ENCODE measurements at regions of chr5 and their contacts with region 1.

Region 1: GRCh38 chr5:43040287-43041098 is at the start of gene ANXA2R:
- DNase-seq: peak; percentile 87 to 98 (median 95)
- H3K4me3 ChIP-seq: peak within 1 kb of the TSS; percentile 98
- H3K4me3 Mint-ChIP-seq: peak within 1 kb of the TSS; percentile 91 to 100 (median 99)
- H3K27ac ChIP-seq: peak within 1 kb of the TSS; percentile 88
- H3K27ac Mint-ChIP-seq: peak within 1 kb of the TSS; percentile 97 to 100 (median 99)
- H3K4me1 ChIP-seq: peaks cover 36% of the 10 kb centered on the region
- H3K4me1 Mint-ChIP-seq: peaks cover 45 to 62% (median 51%) of the 10 kb centered on the region in 3 donors
- H3K27me3 ChIP-seq: no peaks in the 10 kb centered on the region
- H3K27me3 Mint-ChIP-seq: peaks cover 0 to 13% of the 10 kb centered on the region in 2 donors
- total RNA-seq, gene ANXA2R: 6.0 to 6.8 TPM

Region 2: GRCh38 chr5:42908509-42909488 is 131.7 kb before region 1 on chr5:
- CTCF ChIA-PET with region 1: interaction called, 86 read pairs
- POLR2A ChIA-PET with region 1: interaction called, 18 read pairs
- DNase-seq: peak; percentile 82 to 95 (median 88)
- H3K4me3 ChIP-seq: peak overlapping the region; percentile 78
- H3K4me3 Mint-ChIP-seq: peak overlapping the region; percentile 78 to 98 (median 94)
- H3K27ac ChIP-seq: no peak overlapping the region
- H3K27ac Mint-ChIP-seq: peak overlapping the region; percentile 65 to 98 (median 94)
- H3K4me1 ChIP-seq: peaks cover 10% of the 10 kb centered on the region
- H3K4me1 Mint-ChIP-seq: peaks cover 15 to 19% (median 16%) of the 10 kb centered on the region in 3 donors
- H3K27me3 ChIP-seq: peaks cover 6% of the 10 kb centered on the region
- H3K27me3 Mint-ChIP-seq: peaks cover 8 to 15% of the 10 kb centered on the region in 2 donors

Region 3: GRCh38 chr5:42970636-42971559 is 69.6 kb before region 1 on chr5:
- CTCF ChIA-PET with region 1: no interaction called
- POLR2A ChIA-PET with region 1: no interaction called
- DNase-seq: no peak
- H3K4me3 ChIP-seq: no peak overlapping the region
- H3K4me3 Mint-ChIP-seq: no peak overlapping the region
- H3K27ac ChIP-seq: no peak overlapping the region
- H3K27ac Mint-ChIP-seq: peak overlapping the region in 2 of 8 donors; percentile 43 to 44
- H3K4me1 ChIP-seq: no peaks in the 10 kb centered on the region
- H3K4me1 Mint-ChIP-seq: peaks cover 7 to 8% (median 8%) of the 10 kb centered on the region in 3 donors
- H3K27me3 ChIP-seq: no peaks in the 10 kb centered on the region
- H3K27me3 Mint-ChIP-seq: no peaks in the 10 kb centered on the region

Region 4: DNA sequence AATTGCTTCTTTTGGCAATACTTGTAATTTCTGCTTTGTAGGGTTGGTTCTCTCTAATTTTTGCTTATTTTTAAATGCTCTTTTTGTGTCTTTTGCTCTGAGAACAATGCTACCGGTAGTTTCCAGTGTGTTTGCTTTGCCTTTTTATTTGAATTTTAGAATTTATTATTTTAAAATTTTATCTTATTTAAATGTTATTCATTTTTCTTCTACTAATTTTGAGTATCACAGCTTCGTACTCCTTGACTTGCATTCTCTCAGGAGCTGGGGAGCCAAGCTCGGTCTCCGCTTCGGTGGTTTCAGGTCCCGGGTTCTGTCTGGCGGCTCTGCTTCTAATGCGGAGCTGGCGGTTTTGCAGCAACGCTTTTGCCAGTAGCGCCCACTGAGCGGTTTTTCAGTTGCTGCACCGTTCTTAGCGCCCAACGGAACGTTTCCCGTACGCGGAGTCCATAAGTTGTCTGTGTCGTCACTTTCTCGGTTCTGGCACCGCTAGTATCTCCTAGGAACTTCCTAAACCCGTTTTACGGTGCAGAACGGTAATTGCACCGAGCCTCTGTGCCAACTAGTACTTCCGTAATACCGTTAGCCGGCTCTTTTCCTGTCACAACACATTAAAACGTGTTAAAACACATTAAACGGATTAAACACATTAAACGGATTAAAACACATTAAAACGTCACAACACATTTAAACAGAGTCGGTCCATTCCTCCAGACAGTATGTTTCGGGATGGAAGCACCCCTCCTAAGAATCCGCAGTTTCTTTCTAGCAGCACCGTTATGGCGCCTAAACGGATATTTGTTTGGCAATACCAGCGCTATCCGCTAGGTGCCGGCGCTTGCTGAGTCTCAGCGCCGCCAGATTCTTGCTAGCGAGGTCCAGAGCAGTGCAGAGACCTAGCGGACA is 46.0 kb before region 1 on chr5:
- CTCF ChIA-PET with region 1: interaction called, 245 read pairs
- POLR2A ChIA-PET with region 1: interaction called, 323 read pairs
- DNase-seq: peak; percentile 74 to 91 (median 84)
- H3K4me3 ChIP-seq: peak overlapping the region; percentile 97
- H3K4me3 Mint-ChIP-seq: peak overlapping the region; percentile 94 to 100 (median 99)
- H3K27ac ChIP-seq: peak overlapping the region; percentile 97
- H3K27ac Mint-ChIP-seq: peak overlapping the region; percentile 97 to 100 (median 100)
- H3K4me1 ChIP-seq: peaks cover 29% of the 10 kb centered on the region
- H3K4me1 Mint-ChIP-seq: peaks cover 31 to 35% (median 35%) of the 10 kb centered on the region in 3 donors
- H3K27me3 ChIP-seq: no peaks in the 10 kb centered on the region
- H3K27me3 Mint-ChIP-seq: peaks cover 0 to 13% of the 10 kb centered on the region in 2 donors

Region 5: GRCh38 chr5:43014522-43014921 is 26.0 kb before region 1 on chr5:
- CTCF ChIA-PET with region 1: interaction called, 265 read pairs
- POLR2A ChIA-PET with region 1: interaction called, 403 read pairs
- DNase-seq: no peak
- H3K4me3 ChIP-seq: no peak overlapping the region
- H3K4me3 Mint-ChIP-seq: peak overlapping the region in 2 of 7 donors; percentile 34 to 100
- H3K27ac ChIP-seq: no peak overlapping the region
- H3K27ac Mint-ChIP-seq: peak overlapping the region in 7 of 8 donors; percentile 26 to 100 (median 68)
- H3K4me1 ChIP-seq: peaks cover 39% of the 10 kb centered on the region
- H3K4me1 Mint-ChIP-seq: peaks cover 45 to 63% (median 62%) of the 10 kb centered on the region in 3 donors
- H3K27me3 ChIP-seq: no peaks in the 10 kb centered on the region
- H3K27me3 Mint-ChIP-seq: peaks cover 0 to 9% of the 10 kb centered on the region in 2 donors

Region 6: GRCh38 chr5:43027054-43027785 is 13.3 kb before region 1 on chr5:
- CTCF ChIA-PET with region 1: interaction called, 265 read pairs
- POLR2A ChIA-PET with region 1: interaction called, 403 read pairs
- DNase-seq: no peak
- H3K4me3 ChIP-seq: no peak overlapping the region
- H3K4me3 Mint-ChIP-seq: no peak overlapping the region
- H3K27ac ChIP-seq: no peak overlapping the region
- H3K27ac Mint-ChIP-seq: peak overlapping the region in 7 of 8 donors; percentile 7 to 66 (median 14)
- H3K4me1 ChIP-seq: peaks cover 5% of the 10 kb centered on the region
- H3K4me1 Mint-ChIP-seq: peaks cover 10 to 43% (median 18%) of the 10 kb centered on the region in 3 donors
- H3K27me3 ChIP-seq: no peaks in the 10 kb centered on the region
- H3K27me3 Mint-ChIP-seq: no peaks in the 10 kb centered on the region

Region 7: GRCh38 chr5:43105369-43106289 is 65.1 kb after region 1 on chr5:
- CTCF ChIA-PET with region 1: interaction called, 12 read pairs
- POLR2A ChIA-PET with region 1: no interaction called
- DNase-seq: peak; percentile 80 to 92 (median 84)
- H3K4me3 ChIP-seq: peak overlapping the region; percentile 74
- H3K4me3 Mint-ChIP-seq: peak overlapping the region; percentile 77 to 91 (median 85)
- H3K27ac ChIP-seq: peak overlapping the region; percentile 19
- H3K27ac Mint-ChIP-seq: peak overlapping the region; percentile 72 to 95 (median 90)
- H3K4me1 ChIP-seq: peaks cover 21% of the 10 kb centered on the region
- H3K4me1 Mint-ChIP-seq: peaks cover 33 to 45% (median 44%) of the 10 kb centered on the region in 3 donors
- H3K27me3 ChIP-seq: no peaks in the 10 kb centered on the region
- H3K27me3 Mint-ChIP-seq: no peaks in the 10 kb centered on the region

Region 8: DNA sequence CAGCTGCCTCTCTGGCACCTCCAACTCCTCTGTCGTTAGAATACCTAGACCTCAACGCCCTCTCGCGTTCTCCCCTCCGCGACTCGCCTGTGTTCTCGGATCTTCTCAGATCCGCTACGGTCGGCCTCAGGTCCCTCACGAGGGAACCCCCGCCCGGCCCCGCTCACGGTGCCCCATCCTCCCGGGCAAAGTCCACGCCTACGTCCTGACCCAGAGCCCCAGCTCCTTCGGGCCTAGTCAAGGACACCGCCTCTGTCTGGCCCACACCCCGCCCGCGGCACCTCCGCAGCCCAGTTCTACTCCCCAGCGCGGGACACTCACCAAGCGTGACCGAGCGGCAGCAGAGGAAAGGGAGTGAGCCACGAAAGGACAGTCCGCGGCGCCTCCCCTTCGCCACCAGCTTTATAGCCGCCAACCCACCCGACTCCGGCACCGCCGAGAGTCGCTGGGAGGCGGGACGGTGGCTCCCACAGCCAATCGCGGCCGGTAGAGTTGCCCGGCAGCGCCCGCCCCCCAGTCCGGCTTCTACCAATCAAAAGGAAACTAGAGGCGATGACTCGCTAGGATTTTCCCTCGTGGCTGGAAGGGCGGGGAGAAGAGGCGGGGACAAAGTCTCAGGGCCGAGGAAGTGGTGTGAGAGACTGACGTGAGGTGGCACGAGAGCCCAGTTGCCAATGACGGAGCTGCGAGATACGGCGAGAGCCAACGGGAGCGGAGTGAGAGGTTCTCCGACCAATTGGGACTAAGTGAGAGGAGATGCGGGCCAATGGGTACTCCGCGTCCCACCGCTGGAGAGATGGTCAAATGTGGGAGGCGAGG is 272.8 kb after region 1 on chr5 and contains the start of gene HMGCS1:
- CTCF ChIA-PET with region 1: interaction called, 6 read pairs
- POLR2A ChIA-PET with region 1: interaction called, 10 read pairs
- DNase-seq: peak; percentile 97 to 99 (median 99)
- H3K4me3 ChIP-seq: peak within 1 kb of the TSS; percentile 77
- H3K4me3 Mint-ChIP-seq: peak within 1 kb of the TSS; percentile 88 to 97 (median 95)
- H3K27ac ChIP-seq: peak within 1 kb of the TSS; percentile 97
- H3K27ac Mint-ChIP-seq: peak within 1 kb of the TSS; percentile 82 to 96 (median 95)
- H3K4me1 ChIP-seq: peaks cover 36% of the 10 kb centered on the region
- H3K4me1 Mint-ChIP-seq: peaks cover 25 to 45% (median 42%) of the 10 kb centered on the region in 3 donors
- H3K27me3 ChIP-seq: no peaks in the 10 kb centered on the region
- H3K27me3 Mint-ChIP-seq: peaks cover 3 to 8% of the 10 kb centered on the region in 2 donors
- total RNA-seq, gene HMGCS1: 70.3 to 75.1 TPM